HEK293 (cell line): ENCODE measurements at regions of chr5 and their contacts with region 1.

Region 1: DNA sequence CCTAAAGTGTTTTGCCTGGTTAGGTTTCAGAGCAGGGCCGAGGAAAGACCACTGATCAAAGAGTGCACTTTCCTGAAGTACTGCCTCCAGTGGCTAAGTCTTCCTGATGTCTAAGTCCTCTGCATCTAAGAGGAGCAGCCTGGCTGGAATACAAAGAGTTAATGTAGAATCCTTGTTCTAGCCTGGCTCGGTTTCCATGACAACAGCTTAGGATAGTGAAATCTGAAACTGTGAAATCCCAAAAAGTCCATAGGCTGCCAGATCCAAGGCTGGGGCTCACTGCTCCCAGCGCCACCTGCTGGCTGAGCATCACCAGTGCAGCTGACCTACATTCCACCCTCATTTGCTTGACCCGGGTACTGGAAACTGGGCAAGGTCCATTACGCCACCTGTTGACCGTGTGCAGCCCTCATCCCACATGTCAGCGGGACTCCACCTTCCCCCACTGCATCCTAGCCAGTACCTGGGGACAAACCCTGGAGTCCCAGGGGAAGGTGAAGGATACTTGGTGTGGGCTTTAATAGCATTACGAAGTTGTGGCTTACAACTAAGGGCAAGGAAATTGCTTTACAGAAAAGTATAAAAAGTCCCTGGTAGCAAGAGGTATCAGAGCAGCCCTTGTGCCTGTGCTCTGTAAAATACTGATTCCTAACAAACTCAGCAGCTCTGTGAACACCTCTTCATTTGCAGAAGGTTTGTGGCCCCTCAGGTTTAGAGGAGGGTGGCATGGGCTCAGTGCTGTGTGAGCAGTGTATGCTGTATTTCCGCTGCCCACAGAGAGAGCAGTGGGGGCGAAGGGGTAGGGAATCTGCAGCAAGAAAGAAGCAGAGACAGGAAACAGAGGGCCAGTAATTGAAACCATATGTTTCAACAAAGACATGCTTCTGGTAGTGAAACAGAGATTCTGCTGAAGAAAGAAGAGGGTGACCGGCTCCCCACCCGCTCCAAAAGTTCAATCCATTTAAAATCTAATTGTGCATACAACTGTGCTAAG is 36.0 kb downstream of the PCDHGC5 start:
- H3K4me3 ChIP-seq: no peak overlapping the region
- H3K27ac ChIP-seq: no peak overlapping the region
- H3K4me1 ChIP-seq: peaks cover 11% of the 10 kb centered on the region
- CTCF ChIP-seq: peak; percentile 98

Region 2: DNA sequence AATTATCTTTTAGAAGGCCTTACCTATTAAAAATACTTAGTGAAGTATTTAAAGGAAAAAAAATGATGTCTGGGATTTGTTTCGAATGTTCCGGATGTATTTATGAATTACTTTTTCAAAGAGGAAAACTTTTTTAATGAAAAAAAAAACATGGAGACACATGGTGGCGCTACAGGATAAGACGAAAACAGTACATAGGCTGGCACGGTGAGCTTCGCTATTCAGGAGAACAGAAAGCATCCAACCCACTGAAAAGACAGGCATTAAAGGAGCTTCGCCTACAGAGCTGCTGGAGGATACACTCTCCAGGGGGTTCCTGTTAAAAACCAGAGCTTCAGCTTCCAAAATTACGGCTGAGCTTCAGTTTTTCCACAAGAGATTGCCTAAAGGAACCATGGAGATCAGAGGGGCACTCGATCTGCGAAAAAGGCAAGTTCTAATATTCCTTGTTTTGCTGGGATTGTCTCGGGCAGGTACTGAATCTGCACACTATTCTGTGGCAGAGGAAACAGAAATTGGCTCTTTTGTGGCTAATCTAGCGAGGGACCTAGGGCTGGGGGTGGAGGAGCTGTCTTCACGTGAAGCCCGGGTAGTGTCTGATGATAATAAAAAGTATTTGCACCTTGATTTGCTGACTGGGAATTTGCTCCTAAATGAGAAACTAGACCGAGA is 301.7 kb before region 1 on chr5 and contains the start of gene PCDHB14:
- CTCF ChIA-PET with region 1: interaction called, 10 read pairs
- POLR2A ChIA-PET with region 1: no interaction called
- H3K4me3 ChIP-seq: peak within 1 kb of the TSS; percentile 4
- H3K27ac ChIP-seq: no peak within 1 kb of the TSS
- H3K4me1 ChIP-seq: no peaks in the 10 kb centered on the region; the same call in 1 of the 2 replicates
- CTCF ChIP-seq: no peak

Region 3: DNA sequence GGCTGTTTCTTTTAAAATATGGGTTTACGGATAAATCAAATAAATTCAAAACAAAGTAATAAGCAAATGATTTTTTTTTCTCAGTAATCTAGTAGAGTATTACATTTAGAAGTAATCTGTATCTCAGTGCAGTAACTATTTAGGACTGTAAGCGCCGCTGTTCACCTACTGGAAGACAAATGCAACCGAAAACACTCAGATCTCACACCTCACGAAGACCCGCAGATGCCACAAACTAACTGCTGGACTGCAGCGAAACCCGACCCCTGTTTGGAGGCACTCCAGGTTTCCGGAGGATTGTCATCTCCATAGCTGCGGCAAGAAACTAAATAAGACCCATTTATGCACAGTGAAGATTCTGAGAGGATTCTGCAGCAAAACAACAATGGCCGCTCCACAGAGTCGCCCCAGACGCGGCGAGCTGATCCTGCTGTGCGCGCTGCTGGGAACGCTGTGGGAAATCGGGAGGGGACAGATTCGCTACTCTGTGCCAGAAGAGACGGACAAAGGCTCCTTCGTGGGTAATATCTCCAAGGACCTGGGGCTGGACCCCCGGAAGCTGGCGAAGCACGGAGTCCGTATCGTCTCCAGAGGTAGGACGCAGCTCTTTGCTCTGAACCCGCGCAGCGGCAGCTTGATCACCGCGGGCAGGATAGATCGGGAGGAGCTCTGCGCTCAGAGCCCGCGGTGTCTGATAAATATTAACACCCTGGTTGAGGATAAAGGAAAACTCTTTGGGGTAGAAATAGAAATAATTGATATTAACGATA is 132.3 kb before region 1 on chr5 and contains the start of gene PCDHGA8:
- CTCF ChIA-PET with region 1: interaction called, 18 read pairs
- POLR2A ChIA-PET with region 1: no interaction called
- H3K4me3 ChIP-seq: no peak within 1 kb of the TSS
- H3K27ac ChIP-seq: no peak within 1 kb of the TSS
- H3K4me1 ChIP-seq: no peaks in the 10 kb centered on the region
- CTCF ChIP-seq: no peak

Region 4: DNA sequence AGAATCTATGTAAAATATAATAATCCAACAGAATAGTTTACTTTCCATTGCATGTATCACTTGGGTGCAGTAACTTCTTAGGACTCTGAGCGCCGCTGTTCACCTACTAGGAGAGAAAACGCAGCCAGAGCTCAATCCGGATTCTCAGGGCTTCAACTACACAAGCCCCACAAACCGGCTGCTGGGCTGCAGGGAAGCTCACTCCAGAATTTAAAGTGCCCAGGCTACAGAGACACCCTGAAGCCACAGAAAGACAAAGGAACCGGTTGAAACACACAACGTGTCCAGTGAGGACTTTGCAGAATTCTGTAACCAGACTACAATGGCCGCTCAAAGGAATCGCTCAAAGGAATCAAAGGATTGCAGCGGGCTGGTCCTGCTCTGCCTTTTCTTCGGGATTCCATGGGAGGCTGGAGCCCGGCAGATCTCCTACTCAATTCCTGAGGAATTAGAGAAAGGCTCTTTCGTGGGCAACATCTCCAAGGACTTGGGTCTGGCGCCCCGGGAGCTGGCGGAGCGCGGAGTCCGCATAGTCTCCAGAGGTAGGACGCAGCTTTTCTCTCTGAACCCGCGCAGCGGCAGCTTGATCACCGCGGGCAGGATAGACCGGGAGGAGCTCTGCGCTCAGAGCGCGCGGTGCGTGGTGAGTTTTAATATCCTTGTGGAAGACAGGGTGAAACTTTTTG is 111.9 kb before region 1 on chr5 and contains the start of gene PCDHGA10:
- CTCF ChIA-PET with region 1: interaction called, 160 read pairs
- POLR2A ChIA-PET with region 1: no interaction called
- H3K4me3 ChIP-seq: no peak within 1 kb of the TSS
- H3K27ac ChIP-seq: no peak within 1 kb of the TSS
- H3K4me1 ChIP-seq: no peaks in the 10 kb centered on the region
- CTCF ChIP-seq: no peak

Region 5: DNA sequence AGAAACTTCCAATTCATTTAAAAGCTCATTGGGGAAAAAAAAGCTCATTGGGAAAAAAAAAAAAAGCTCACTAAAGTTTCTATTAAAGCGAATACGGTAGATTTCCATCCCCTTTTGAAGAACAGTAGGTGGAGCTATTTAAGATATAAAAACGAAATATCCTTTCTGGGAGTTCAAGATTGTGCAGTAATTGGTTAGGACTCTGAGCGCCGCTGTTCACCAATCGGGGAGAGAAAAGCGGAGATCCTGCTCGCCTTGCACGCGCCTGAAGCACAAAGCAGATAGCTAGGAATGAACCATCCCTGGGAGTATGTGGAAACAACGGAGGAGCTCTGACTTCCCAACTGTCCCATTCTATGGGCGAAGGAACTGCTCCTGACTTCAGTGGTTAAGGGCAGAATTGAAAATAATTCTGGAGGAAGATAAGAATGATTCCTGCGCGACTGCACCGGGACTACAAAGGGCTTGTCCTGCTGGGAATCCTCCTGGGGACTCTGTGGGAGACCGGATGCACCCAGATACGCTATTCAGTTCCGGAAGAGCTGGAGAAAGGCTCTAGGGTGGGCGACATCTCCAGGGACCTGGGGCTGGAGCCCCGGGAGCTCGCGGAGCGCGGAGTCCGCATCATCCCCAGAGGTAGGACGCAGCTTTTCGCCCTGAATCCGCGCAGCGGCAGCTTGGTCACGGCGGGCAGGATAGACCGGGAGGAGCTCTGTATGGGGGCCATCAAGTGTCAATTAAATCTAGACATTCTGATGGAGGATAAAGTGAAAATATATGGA is 94.4 kb before region 1 on chr5 and contains the start of gene PCDHGA12:
- CTCF ChIA-PET with region 1: interaction called, 38 read pairs
- POLR2A ChIA-PET with region 1: no interaction called
- H3K4me3 ChIP-seq: no peak within 1 kb of the TSS
- H3K27ac ChIP-seq: no peak within 1 kb of the TSS
- H3K4me1 ChIP-seq: no peaks in the 10 kb centered on the region
- CTCF ChIP-seq: no peak

Region 6: GRCh38 chr5:141484641-141485311 is 40.1 kb before region 1 on chr5 and contains the start of gene PCDHGC4:
- CTCF ChIA-PET with region 1: interaction called, 47 read pairs
- POLR2A ChIA-PET with region 1: no interaction called
- H3K4me3 ChIP-seq: peak within 1 kb of the TSS; percentile 40
- H3K27ac ChIP-seq: no peak within 1 kb of the TSS
- H3K4me1 ChIP-seq: peaks cover 9% of the 10 kb centered on the region
- CTCF ChIP-seq: no peak